ENCODE measurements at regions of chr10 and their contacts with region 1.

Region 1: GRCh38 chr10:91006001-91006751 is 85.3 kb upstream of the ANKRD1 start:
- DNase-seq: peak; percentile 28
- CTCF ChIP-seq: peak; percentile 67

Region 2: DNA sequence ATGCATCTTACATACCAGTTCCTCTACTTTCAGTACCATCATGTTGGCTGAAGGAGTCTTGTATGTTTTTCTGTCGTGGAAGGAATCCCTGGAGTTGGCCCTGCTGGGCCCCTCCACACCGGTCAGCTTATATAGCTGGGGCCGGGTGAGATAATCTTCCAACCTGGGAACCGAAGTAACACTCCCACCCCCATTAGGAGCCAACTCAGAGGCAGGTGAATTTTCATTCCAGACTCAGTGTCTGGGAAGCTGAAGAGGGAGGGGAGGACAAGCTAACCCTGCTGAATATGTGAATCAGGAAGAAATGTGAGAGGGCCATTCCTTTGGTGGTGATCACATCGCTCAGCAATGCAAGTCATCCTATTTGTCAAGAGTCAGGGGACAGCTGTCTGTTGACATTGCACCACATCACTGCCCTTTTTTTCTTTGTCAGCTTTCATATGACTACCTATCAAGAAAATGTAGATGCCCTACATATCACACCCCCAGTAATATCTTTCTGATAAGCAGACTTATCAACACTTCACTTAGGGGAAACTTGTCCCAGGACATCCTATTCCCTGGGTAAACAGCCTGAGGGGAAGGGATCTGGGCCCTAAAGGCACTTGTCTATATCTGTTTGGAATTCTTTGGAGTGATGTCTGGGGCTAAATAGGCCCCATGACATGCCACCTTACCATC is 85.0 kb before region 1 on chr10 and contains the start of gene ANKRD1:
- CTCF ChIA-PET with region 1: interaction called, 10 read pairs
- POLR2A ChIA-PET with region 1: no interaction called
- DNase-seq: no peak
- CTCF ChIP-seq: no peak

Region 3: DNA sequence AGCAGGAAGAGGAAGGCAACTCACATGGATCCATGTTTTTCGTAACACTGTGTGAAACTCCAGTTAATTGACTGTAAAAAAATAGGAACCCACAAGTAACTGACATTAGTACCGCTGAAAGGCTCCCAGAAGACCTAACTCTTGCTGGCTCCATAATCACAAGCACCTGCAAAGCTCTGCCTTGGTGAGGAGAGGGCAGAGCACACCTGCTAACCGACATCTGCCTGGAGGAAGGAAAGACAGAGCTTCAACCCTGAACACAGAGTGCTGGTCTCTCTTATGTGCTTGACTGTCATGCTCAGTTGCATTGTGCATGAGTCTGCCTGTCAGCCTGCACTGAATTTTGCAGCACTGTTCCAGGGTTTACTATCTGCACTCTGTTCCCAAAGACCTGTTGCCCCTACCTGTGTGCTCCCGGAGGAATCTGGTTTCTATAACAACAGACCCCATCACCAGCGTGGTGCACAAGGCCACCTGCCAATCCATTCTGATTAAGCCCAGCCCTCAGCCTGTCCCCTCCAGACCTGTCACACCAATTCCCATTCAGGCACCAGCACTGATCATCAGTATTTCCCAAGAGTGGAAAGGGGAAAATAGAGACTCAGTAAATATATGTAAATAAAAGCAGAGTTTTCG is 22.1 kb before region 1 on chr10:
- CTCF ChIA-PET with region 1: interaction called, 55 read pairs
- POLR2A ChIA-PET with region 1: no interaction called
- DNase-seq: no peak
- CTCF ChIP-seq: no peak

Region 4: DNA sequence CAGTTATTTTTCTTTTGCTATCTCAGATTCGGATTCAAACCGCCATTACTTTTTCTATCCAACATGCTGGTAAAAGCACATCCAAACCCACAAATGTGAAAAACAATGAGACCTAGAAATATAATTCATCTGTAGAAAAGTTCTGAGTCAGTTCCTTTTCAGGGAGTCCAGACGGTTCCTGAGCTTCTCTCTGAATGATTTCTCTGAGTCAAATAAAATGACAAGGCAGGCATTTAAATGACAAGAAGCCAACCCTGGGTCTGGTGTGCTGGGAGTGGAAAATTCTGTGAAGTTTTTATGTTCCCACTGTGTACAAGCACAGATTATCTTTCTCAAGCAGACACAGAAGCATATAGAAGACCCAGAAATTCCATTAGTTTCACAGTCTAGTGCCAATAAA is 11.0 kb after region 1 on chr10:
- CTCF ChIA-PET with region 1: interaction called, 35 read pairs
- POLR2A ChIA-PET with region 1: no interaction called
- DNase-seq: no peak
- CTCF ChIP-seq: no peak

Region 5: DNA sequence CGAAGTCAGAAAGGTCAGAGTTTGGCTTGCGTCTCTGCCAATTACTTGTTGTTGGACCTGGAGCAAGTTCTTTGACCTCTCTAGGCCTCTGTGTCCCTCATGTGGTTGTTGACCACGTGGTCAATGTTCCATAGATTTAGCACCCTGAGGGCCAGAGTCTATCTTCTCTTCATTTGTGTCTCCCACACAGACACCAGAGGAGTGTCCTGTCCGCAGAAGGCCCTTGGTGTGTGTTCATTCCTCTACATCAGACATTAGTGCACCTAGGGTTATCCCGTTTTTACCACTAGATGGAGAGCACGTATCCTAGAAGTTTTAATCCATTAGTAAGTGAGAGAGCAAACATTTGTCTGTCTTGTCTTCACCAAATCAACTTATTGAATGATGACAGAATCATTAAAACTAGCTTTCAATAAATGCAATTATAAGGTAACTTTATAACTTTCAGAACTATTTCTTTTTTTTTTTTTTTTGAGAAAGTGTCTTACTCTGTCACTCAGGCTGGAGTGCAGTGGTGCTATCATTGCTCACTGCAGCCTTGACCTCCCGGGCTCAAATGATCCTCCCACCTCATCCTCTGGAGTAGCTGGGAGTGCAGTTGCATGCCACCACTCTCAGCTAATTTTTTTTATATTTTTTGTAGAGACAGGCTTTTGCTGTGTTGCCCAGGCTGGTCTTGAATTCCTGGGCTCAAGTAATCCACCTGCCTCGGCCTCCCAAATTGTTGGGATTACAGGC is 37.2 kb after region 1 on chr10:
- CTCF ChIA-PET with region 1: interaction called, 10 read pairs
- POLR2A ChIA-PET with region 1: no interaction called
- DNase-seq: no peak
- CTCF ChIP-seq: peak; percentile 15

Measured in GM10248 (cell line).